HepG2 (cell line): ENCODE measurements at regions of chr12 and their contacts with region 1.

Region 1: DNA sequence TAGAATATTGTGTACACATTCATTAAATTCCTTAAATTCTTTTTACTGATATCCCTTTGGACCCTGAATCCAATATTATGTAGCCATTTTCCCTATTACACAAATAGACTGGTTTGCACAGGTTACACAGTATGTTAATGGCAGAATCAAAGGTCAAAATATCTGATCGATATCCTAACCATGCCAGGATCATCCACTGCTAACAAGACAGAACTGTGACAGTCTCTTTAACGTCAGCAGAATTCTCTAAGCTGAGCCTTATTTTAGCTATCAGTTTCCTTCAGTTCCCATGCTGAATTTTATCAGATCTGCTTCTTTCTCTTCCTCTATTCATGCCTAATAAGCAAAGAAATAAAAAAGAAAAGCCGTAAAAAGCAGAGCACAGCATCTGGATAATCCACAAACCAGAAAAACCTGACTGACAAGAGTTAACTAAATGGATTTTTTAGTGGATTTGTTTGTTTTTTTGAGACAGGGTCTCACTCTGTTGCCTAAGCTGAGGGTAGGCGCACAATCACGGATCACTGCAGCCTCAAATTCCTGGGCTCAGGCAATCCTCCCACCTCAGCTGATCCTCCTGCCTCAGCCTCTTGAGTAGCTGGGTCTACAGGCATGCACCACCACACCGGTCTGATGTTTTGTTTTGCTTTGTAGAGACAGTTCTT is 130.4 kb downstream of the PAWR start:
- DNase-seq: peak; percentile 93
- ATAC-seq: peak; percentile 95
- H3K4me3 ChIP-seq: no peak overlapping the region
- H3K27ac ChIP-seq: peak overlapping the region; percentile 89
- H3K4me1 ChIP-seq: peaks cover 60% of the 10 kb centered on the region
- H3K27me3 ChIP-seq: no peaks in the 10 kb centered on the region
- CTCF ChIP-seq: no peak
- EP300 ChIP-seq: peak; percentile 59 to 90
- POLR2A ChIP-seq: no peak
- RAD21 ChIP-seq: no peak

Region 2: GRCh38 chr12:79531122-79531913 is 29.0 kb before region 1 on chr12:
- CTCF ChIA-PET with region 1: no interaction called
- POLR2A ChIA-PET with region 1: interaction called, 11 read pairs
- in situ Hi-C with region 1: no loop called
- intact Hi-C with region 1: no loop called
- DNase-seq: peak; percentile 46
- ATAC-seq: no peak
- H3K4me3 ChIP-seq: no peak overlapping the region
- H3K27ac ChIP-seq: peak overlapping the region; percentile 71
- H3K4me1 ChIP-seq: peaks cover 75% of the 10 kb centered on the region
- H3K27me3 ChIP-seq: no peaks in the 10 kb centered on the region
- CTCF ChIP-seq: no peak
- EP300 ChIP-seq: 0 out of 4 replicates have a peak, but pooled peaks of 1 of the 2 experiments have one; percentile 14
- POLR2A ChIP-seq: no peak
- RAD21 ChIP-seq: no peak

Region 3: DNA sequence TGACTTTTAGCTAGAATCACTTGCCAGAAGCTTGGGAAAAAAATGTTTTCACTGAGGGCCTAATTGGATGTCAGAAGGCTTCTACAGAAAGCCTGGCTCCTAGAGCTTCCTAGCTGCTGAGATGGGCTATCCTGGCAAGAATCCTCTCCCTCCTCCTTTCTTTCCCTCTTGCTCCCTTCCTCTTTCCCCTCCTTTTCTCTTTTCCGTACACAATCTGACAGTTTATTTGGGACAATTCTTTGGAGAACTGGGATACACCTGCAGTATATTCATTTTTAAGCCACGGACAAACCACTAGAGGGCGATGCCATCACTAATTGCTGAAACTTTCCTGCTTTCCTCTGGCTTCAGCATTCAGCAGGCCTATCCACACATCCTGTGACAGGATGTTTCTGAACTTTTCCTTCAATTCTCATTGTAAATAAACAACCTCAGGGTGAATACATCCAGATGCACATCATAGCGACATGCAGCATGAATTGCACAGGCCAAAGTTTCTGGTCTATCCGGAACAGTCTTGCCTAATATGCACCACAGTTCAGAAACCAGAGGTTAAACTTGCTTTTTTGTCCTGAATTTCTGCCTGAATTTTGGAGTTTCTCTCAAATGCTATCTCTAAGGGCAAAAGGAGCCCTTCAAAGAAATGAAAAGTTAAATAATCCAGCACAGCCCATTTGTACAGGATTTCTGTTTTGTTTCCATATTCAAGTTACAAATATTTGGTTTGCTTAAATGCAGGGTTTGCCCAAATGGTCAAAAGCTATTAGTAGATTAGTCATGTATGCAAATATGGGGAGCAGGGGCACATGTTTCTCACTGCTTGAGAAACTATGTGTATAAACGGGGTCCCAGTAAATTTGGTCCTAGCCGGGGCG is 12.4 kb before region 1 on chr12:
- CTCF ChIA-PET with region 1: no interaction called
- POLR2A ChIA-PET with region 1: interaction called, 24 read pairs
- in situ Hi-C with region 1: no loop called
- intact Hi-C with region 1: loop called (anchors 1 kb)
- DNase-seq: peak; percentile 91
- ATAC-seq: peak; percentile 78
- H3K4me3 ChIP-seq: peak overlapping the region in 1 of 3 experiments; percentile 1; a peak in 1 of 6 replicates
- H3K27ac ChIP-seq: peak overlapping the region; percentile 78
- H3K4me1 ChIP-seq: peaks cover 74% of the 10 kb centered on the region
- H3K27me3 ChIP-seq: no peaks in the 10 kb centered on the region
- CTCF ChIP-seq: peak; percentile 83
- EP300 ChIP-seq: peak in 1 of 2 experiments; percentile 90; a peak in 2 of 4 replicates
- POLR2A ChIP-seq: peak in 1 of 2 experiments; percentile 36; a peak in 1 of 4 replicates
- RAD21 ChIP-seq: no peak

Region 4: GRCh38 chr12:79685068-79685467 is 124.7 kb after region 1 on chr12:
- CTCF ChIA-PET with region 1: no interaction called
- POLR2A ChIA-PET with region 1: interaction called, 25 read pairs
- in situ Hi-C with region 1: loop called (anchors 25 kb)
- intact Hi-C with region 1: loop called (anchors 1 kb)
- DNase-seq: peak; percentile 26
- ATAC-seq: 0 out of 3 replicates have a peak, but pooled peaks have one; percentile 9
- H3K4me3 ChIP-seq: peak overlapping the region; percentile 35 to 97 (median 76); a peak in 3 of 6 replicates
- H3K27ac ChIP-seq: peak overlapping the region; percentile 11
- H3K4me1 ChIP-seq: peaks cover 51% of the 10 kb centered on the region
- H3K27me3 ChIP-seq: no peaks in the 10 kb centered on the region; a peak in 1 of 5 replicates
- CTCF ChIP-seq: no peak
- EP300 ChIP-seq: no peak
- POLR2A ChIP-seq: no peak
- RAD21 ChIP-seq: no peak

Region 5: DNA sequence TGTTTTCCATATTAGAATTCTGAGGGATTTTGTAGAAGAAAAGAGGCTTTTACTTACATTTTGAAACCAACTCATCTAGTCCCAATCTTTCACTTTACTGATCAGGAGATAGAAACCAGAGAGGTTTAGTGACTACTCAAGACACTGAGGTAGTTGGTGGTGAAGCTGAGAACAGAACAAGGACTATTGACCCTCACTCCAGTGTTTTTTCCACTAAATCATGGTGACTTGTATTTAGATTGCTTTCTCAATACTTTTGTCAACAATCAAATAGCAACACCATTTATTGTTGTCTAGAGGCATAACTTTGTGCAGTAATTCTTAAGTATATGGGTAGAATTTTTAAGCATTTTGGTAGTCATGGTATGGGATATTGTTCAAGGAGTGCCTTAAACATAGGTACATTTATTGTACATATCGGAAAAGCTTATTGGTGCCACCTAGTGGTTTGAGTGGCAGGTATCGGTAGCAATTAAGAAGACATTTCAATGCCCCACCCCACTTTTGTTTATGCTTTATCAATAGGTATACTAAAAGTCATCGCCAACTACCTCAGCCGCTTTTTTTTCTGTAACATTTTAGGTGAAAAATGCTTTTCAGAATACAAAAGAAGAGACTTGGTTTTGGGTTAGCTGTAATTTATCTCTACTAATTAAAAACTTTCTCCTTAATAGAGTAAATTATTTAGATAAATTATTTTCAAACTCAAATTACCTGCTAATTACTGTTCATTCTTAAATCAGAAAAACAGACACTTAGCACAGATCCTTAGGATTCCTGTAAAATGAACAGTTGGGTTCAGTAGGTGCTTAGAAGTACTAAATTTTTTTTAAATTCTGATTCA is 177.7 kb after region 1 on chr12:
- CTCF ChIA-PET with region 1: interaction called, 21 read pairs
- POLR2A ChIA-PET with region 1: no interaction called
- in situ Hi-C with region 1: loop called (anchors 5 kb)
- intact Hi-C with region 1: loop called (anchors 1 kb)
- DNase-seq: peak; percentile 68
- ATAC-seq: peak; percentile 84
- H3K4me3 ChIP-seq: no peak overlapping the region
- H3K27ac ChIP-seq: no peak overlapping the region
- H3K4me1 ChIP-seq: peaks cover 6% of the 10 kb centered on the region
- H3K27me3 ChIP-seq: no peaks in the 10 kb centered on the region
- CTCF ChIP-seq: peak; percentile 77
- EP300 ChIP-seq: no peak
- POLR2A ChIP-seq: no peak
- RAD21 ChIP-seq: peak; percentile 46; the same call in 1 of the 2 replicates